ENCODE measurements at regions of chr12 and their contacts with region 1.

Region 1: DNA sequence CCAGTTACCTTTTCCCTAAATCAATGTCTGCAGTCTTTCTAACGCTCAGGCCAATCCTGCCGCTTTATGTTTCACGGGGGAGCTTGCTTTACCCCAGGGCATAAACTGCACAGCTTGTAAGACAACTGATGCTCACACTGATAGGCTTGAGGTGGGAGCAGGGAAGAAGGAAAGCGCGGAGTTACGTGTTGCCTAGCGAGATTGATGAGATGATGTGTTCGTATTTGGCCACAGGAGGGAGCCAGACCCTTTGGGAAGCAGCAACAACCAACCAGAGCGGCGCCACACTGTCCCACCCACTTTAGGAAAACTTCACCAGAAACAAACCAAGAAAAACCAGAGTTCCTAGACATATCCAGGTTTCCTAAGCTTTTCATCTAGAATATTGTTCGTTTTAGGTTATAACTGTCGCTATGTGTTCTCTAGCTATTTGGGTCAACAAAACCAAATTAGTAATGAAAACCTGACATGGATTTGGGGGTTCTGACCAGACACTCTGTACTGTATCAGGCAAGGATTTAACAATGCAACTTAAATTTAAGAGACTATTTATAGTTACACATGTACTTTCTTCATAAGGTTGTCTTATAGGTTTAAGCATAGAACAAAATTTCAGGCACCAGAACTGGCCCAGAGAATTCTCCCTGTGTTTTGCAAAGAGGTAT is 2.4 kb downstream of the IL26 start:
- DNase-seq: peak; percentile 78
- H3K4me3 Mint-ChIP-seq: peak overlapping the region; percentile 59
- H3K27ac Mint-ChIP-seq: peak overlapping the region; percentile 63
- H3K4me1 Mint-ChIP-seq: peaks cover 35% of the 10 kb centered on the region
- H3K27me3 Mint-ChIP-seq: peaks cover 26% of the 10 kb centered on the region

Region 2: DNA sequence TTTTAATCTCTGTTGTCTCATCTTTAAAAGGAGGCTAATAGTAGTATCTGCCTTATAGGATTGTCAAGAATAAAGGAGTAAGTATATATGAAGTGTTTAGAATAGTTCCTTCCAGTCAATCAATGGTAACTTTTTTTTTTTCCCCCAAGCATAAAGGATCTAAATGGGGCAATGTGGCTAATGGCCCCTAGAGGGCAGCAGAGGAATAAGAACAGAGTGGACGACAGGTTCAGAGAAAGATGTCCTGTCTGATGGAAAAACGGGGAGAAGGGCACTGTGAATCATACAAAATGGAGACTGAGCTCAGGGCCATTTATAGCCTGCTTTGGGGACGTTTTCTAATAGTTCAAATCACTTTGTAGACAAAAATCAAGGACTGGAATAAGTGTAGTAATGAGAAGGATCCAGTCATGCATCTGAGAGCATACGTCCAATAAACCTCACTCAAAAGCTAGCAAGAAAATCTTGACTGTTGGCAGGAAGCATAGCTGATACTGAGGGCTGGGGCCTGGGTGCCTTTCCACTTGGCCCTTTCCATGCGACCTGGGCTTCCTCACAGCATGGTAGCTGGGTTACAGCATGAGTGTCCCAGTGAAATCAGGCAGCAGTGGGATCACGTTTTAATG is 182.7 kb before region 1 on chr12:
- CTCF ChIA-PET with region 1: interaction called, 60 read pairs
- POLR2A ChIA-PET with region 1: no interaction called
- DNase-seq: peak; percentile 70
- H3K4me3 Mint-ChIP-seq: no peak overlapping the region
- H3K27ac Mint-ChIP-seq: peak overlapping the region; percentile 11
- H3K4me1 Mint-ChIP-seq: peaks cover 36% of the 10 kb centered on the region
- H3K27me3 Mint-ChIP-seq: no peaks in the 10 kb centered on the region

Region 3: DNA sequence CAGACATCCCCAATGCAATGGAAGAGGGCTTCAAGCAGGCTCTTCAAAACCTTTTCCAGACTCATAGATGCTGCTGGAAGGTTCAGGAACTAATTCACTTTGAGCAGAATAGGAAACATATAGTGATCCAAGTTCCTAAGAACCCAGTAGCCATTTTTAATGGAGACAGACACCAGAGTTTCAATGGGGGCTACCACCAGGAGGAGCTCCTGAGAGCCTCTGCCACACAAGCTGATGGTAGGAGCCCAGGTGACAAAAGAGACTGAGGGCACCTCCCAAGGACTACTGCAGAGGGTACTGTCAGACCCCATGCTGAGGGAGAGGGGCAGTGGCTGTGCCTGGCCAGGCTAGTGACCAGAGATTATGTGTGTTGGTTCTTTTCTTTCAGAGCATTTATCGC is 109.6 kb before region 1 on chr12:
- CTCF ChIA-PET with region 1: interaction called, 10 read pairs
- POLR2A ChIA-PET with region 1: no interaction called
- DNase-seq: peak; percentile 64
- H3K4me3 Mint-ChIP-seq: no peak overlapping the region
- H3K27ac Mint-ChIP-seq: no peak overlapping the region
- H3K4me1 Mint-ChIP-seq: peaks cover 39% of the 10 kb centered on the region
- H3K27me3 Mint-ChIP-seq: no peaks in the 10 kb centered on the region

Region 4: GRCh38 chr12:68234140-68234539 is 10.9 kb after region 1 on chr12:
- CTCF ChIA-PET with region 1: interaction called, 11 read pairs
- POLR2A ChIA-PET with region 1: interaction called, 6 read pairs
- DNase-seq: no peak
- H3K4me3 Mint-ChIP-seq: no peak overlapping the region
- H3K27ac Mint-ChIP-seq: no peak overlapping the region
- H3K4me1 Mint-ChIP-seq: peaks cover 61% of the 10 kb centered on the region
- H3K27me3 Mint-ChIP-seq: peaks cover 1% of the 10 kb centered on the region

Region 5: GRCh38 chr12:68240597-68241374 is 17.6 kb after region 1 on chr12:
- CTCF ChIA-PET with region 1: interaction called, 12 read pairs
- POLR2A ChIA-PET with region 1: interaction called, 5 read pairs
- DNase-seq: peak; percentile 67
- H3K4me3 Mint-ChIP-seq: peak overlapping the region; percentile 50
- H3K27ac Mint-ChIP-seq: peak overlapping the region; percentile 88
- H3K4me1 Mint-ChIP-seq: peaks cover 63% of the 10 kb centered on the region
- H3K27me3 Mint-ChIP-seq: no peaks in the 10 kb centered on the region

Region 6: DNA sequence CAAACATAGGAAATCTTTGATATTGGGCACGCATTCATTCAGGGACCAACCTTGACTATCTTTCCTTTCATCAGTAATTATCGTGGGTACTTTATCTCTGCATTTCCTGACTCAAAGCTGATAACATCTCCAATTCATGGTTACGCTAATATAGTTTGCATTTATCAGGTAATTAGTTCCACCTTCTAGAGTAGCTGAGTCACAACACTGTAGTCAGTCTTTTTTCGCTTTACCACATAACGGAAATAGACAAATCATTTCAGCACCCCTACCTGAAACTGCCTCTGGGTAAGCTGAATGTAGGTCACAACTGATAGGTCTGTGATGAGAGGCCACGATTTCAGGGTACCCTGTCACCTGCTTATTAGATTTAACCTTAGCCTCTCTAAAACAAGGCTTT is 66.9 kb after region 1 on chr12:
- CTCF ChIA-PET with region 1: interaction called, 11 read pairs
- POLR2A ChIA-PET with region 1: interaction called, 4 read pairs
- DNase-seq: peak; percentile 58
- H3K4me3 Mint-ChIP-seq: peak overlapping the region; percentile 6
- H3K27ac Mint-ChIP-seq: peak overlapping the region; percentile 65
- H3K4me1 Mint-ChIP-seq: peaks cover 50% of the 10 kb centered on the region
- H3K27me3 Mint-ChIP-seq: peaks cover 9% of the 10 kb centered on the region

Region 7: GRCh38 chr12:68317047-68317667 is 93.9 kb after region 1 on chr12:
- CTCF ChIA-PET with region 1: interaction called, 90 read pairs
- POLR2A ChIA-PET with region 1: interaction called, 10 read pairs
- DNase-seq: peak; percentile 46
- H3K4me3 Mint-ChIP-seq: no peak overlapping the region
- H3K27ac Mint-ChIP-seq: no peak overlapping the region
- H3K4me1 Mint-ChIP-seq: peaks cover 5% of the 10 kb centered on the region
- H3K27me3 Mint-ChIP-seq: no peaks in the 10 kb centered on the region